Gastrocnemius medialis (tissue), 4 donors: ENCODE measurements at regions of chr2 and their contacts with region 1.

Region 1: GRCh38 chr2:11688222-11689069 is 18.5 kb upstream of the NTSR2 start:
- DNase-seq: peak; percentile 79 to 92
- ATAC-seq: peak; percentile 70 to 74
- H3K4me3 ChIP-seq: peak overlapping the region; percentile 30 to 38 (median 36)
- H3K27ac ChIP-seq: peak overlapping the region; percentile 92 to 100 (median 93)
- H3K4me1 ChIP-seq: peaks cover 65 to 71% of the 10 kb centered on the region in 2 donors
- H3K27me3 ChIP-seq: no peaks in the 10 kb centered on the region
- CTCF ChIP-seq: peak; percentile 85 to 93 (median 86)
- POLR2A ChIP-seq: peak; percentile 25 to 38

Region 2: DNA sequence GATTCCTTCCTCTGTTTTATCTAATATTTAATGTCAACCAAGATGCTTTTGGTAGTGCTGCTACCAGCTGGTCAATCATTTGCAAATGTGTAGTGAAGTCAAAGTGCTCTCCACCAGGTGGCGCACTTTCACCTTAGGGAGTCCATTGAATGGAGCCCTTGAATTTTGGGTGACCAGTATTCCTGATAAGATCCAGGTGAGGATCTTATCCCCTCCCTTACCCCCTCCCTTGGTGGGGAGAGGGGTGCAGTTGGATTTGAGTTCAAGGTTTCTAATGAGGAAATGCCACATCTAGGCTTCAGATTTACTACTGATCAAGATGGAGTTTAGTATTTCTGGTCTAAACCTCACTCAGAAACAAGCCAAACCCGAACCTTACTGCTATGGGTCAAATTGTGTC is 210.5 kb before region 1 on chr2:
- in situ Hi-C with region 1: loop called in 1 of 4 experiments (anchors 25 kb)
- intact Hi-C with region 1: no loop called
- DNase-seq: peak; percentile 81 to 82
- ATAC-seq: peak; percentile 75 to 76
- H3K4me3 ChIP-seq: no peak overlapping the region
- H3K27ac ChIP-seq: no peak overlapping the region
- H3K4me1 ChIP-seq: no peaks in the 10 kb centered on the region
- H3K27me3 ChIP-seq: no peaks in the 10 kb centered on the region
- CTCF ChIP-seq: peak; percentile 76 to 92 (median 88)
- POLR2A ChIP-seq: no peak

Region 3: GRCh38 chr2:11543337-11544129 is 144.9 kb before region 1 on chr2:
- in situ Hi-C with region 1: no loop called
- intact Hi-C with region 1: no loop called
- DNase-seq: no peak
- ATAC-seq: no peak
- H3K4me3 ChIP-seq: no peak overlapping the region
- H3K27ac ChIP-seq: no peak overlapping the region
- H3K4me1 ChIP-seq: peaks cover 7 to 28% of the 10 kb centered on the region in 2 donors
- H3K27me3 ChIP-seq: no peaks in the 10 kb centered on the region
- CTCF ChIP-seq: no peak
- POLR2A ChIP-seq: no peak

Region 4: GRCh38 chr2:11598228-11598731 is 90.2 kb before region 1 on chr2:
- in situ Hi-C with region 1: loop called in 1 of 4 experiments (anchors 10 kb)
- intact Hi-C with region 1: no loop called
- DNase-seq: peak; percentile 82 to 89
- ATAC-seq: peak; percentile 95 to 96
- H3K4me3 ChIP-seq: no peak overlapping the region
- H3K27ac ChIP-seq: peak overlapping the region; percentile 86 to 94 (median 90)
- H3K4me1 ChIP-seq: peaks cover 15 to 18% of the 10 kb centered on the region in 2 donors
- H3K27me3 ChIP-seq: no peaks in the 10 kb centered on the region
- CTCF ChIP-seq: no peak
- POLR2A ChIP-seq: peak in 1 of 2 donors; percentile 31

Region 5: DNA sequence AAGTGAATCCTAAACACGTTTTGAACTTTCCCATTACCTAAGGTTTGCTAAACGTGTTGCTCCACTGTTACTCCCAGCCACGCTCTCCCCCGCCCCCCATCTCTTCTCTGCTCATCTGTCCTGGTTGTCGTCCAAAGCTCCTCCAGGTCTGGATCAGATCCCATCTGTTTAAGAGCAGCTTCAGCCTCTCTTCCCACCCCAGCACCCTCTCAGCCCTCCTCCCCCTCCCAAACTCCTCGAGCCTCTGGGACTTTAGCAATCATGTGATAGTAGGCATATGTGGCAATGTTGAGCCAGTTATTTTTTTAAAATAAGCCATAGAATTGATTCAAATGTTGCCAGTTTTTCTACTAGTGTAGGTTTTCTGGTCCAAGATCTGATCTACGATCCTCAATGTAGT is 37.9 kb after region 1 on chr2:
- in situ Hi-C with region 1: no loop called
- intact Hi-C with region 1: no loop called
- DNase-seq: no peak
- ATAC-seq: peak; percentile 15 to 53
- H3K4me3 ChIP-seq: no peak overlapping the region
- H3K27ac ChIP-seq: peak overlapping the region in 1 of 4 donors; percentile 39
- H3K4me1 ChIP-seq: no peaks in the 10 kb centered on the region
- H3K27me3 ChIP-seq: no peaks in the 10 kb centered on the region
- CTCF ChIP-seq: no peak
- POLR2A ChIP-seq: no peak

Region 6: DNA sequence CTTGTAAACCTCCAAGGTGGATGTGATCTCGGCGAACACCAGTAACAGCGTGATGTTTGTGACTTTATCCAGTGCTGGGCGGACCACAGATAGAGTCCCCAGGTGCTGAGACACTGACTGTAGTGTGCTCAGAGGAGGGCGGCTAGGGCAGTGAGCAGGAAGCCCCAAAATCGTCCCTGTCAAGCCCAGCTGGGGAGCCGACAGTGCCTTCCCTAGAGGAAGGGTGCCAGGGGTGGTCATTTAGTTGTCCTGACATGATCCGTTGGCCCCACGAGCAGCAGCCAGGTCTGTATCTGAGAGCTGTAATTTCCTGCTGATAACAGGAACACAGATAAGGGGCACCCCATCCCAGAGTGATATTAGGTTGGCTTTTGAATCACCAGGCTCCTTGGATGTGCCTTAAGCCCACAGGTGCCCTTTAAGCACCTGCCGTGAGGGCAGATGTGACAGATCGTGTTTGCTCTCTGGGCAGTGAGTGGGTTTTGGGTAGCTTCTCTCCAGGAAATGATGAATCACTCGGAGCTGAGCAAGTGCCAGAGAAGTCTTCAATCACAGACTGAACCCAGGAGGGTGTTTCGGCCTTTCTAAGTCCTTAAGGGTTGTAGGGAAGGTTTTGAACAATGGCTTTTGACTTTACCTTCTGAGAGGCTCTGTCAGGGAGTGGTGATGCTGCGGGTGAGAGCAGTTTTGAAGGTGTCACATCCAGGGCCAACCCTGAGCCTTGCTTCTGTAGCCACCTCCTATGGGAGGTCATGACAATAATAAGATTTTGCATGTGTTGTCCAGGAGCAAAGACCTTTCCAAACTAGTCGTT is 65.6 kb after region 1 on chr2:
- in situ Hi-C with region 1: loop called in 2 of 4 experiments (anchors 10 kb)
- intact Hi-C with region 1: no loop called
- DNase-seq: peak; percentile 71 to 83
- ATAC-seq: peak; percentile 80 to 81
- H3K4me3 ChIP-seq: peak overlapping the region; percentile 3 to 39 (median 20)
- H3K27ac ChIP-seq: peak overlapping the region; percentile 82 to 95 (median 93)
- H3K4me1 ChIP-seq: peaks cover 78 to 79% of the 10 kb centered on the region in 2 donors
- H3K27me3 ChIP-seq: no peaks in the 10 kb centered on the region
- CTCF ChIP-seq: no peak
- POLR2A ChIP-seq: peak in 1 of 2 donors; percentile 37

Region 7: DNA sequence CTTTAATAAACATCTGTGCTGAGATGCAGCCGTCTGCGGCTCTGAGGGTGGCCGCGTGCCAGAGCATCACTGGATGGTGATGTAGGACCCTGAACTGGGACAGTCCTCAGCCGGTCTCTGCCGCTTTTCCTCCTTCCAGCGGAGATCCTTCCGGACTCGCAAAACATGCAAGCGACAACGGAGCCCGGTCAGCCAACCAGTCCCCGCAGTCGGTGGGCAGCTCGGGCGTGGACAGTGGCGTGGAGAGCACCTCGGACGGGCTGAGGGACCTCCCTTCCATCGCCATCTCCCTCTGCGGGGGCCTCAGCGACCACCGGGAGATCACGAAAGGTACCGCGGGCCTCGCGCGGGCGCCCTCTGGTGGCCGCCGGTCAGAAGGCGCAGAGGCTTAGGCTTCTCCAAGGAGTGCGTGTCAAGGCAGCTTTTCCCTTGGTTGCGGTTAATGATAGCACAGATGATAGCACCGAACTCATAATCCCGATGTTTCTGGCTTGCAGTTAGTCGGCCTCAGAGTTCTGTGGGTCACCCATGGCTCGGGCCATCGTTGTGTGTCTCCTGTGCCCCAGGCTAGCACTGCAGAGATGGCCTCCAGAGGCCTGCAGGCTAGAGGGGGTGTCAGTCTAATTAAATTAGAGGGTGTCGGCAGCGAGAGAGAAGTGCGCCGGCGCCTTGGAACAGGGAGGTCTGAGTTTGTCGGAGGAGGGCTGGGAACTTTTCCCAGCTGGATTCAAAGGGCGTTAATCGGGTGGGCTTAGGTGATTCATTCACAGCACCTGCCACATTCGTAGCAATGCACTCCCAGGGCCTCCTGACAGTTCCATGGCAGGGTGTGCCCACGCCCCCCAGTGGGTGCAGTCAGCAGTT is 96.5 kb after region 1 on chr2:
- in situ Hi-C with region 1: loop called in 3 of 4 experiments (anchors 5 to 10 kb)
- intact Hi-C with region 1: no loop called
- DNase-seq: no peak
- ATAC-seq: peak; percentile 24 to 51
- H3K4me3 ChIP-seq: peak overlapping the region; percentile 14 to 41 (median 28)
- H3K27ac ChIP-seq: peak overlapping the region; percentile 4 to 46 (median 14)
- H3K4me1 ChIP-seq: no peaks in the 10 kb centered on the region
- H3K27me3 ChIP-seq: no peaks in the 10 kb centered on the region
- CTCF ChIP-seq: peak; percentile 71 to 90 (median 88)
- POLR2A ChIP-seq: no peak